Posterior vena cava (tissue), 2 donors: ENCODE measurements at regions of chr6 and their contacts with region 1.

Region 1: DNA sequence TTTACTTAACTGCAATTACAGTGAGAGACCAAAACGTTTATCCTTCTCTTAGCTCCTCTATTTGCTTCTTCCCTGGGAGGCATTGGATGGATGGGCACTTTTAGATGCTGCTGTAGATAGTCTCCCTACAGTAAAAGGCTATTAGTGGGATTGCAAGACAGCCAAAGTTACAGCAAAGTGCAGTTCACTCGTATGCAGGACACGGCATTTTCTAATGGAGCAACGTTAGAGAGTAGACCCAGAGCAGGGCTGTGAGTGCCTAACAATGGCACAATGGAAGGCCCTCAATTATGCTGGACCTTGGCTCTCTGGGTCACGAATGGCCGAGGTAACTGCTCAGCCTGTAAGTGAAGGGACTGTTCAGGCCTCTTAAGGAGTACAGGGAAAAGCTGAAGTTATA is 605.8 kb upstream of the NOX3 start:
- DNase-seq: no peak

Region 2: GRCh38 chr6:155377061-155377460 is 684.4 kb before region 1 on chr6:
- intact Hi-C with region 1: no loop called
- DNase-seq: no peak

Region 3: DNA sequence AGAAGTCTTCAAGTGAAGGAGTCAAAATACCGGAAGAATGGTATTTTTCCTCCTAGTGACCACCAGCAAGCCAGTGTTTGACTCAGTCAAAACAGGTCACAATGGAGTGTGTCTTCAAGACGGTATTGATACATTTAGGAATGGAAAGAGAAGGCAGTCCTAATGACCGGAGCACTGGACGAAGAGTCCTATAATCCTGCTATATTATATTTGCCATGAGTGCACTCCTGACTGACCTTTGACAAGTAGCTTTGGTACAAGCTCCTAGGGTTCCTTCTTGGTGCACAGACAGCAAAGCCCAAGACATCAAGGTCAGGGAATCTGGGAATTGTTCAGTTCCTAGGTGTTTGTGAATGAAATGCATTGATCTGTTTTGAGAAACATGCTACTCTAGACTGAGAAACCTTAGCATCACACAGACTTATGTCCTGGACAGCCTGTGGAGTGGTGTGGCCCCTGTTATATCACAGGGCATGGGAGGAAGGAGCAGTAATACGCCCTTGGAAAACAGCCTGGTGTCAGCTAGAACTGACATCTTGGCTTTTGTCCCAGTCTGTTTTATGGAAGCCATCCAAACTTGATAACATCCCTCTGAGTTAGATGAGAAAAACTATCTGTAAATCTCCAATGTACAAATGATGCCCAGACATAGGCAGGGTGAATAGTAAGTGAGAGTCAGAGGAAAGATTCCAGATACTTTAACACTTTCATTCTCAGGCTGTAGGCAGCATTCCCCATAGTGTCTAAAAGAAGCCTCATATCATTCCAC is 624.3 kb before region 1 on chr6:
- intact Hi-C with region 1: no loop called
- DNase-seq: no peak

Region 4: GRCh38 chr6:156045401-156046267 is 15.8 kb before region 1 on chr6:
- intact Hi-C with region 1: loop called in 1 of 2 experiments (anchors 1 kb)
- DNase-seq: no peak